ENCODE measurements at regions of chr22 and their contacts with region 1.

Region 1: GRCh38 chr22:49960159-49961004 is at the start of gene PIM3:
- DNase-seq: peak; percentile 89
- ATAC-seq: peak; percentile 79
- H3K4me3 Mint-ChIP-seq: peak within 1 kb of the TSS; percentile 91
- H3K27ac Mint-ChIP-seq: peak within 1 kb of the TSS; percentile 90
- H3K4me1 Mint-ChIP-seq: peaks cover 38% of the 10 kb centered on the region
- H3K27me3 Mint-ChIP-seq: no peaks in the 10 kb centered on the region
- CTCF ChIP-seq: no peak
- total RNA-seq, gene PIM3: 79.8 and 91.7 TPM in 2 replicates

Region 2: DNA sequence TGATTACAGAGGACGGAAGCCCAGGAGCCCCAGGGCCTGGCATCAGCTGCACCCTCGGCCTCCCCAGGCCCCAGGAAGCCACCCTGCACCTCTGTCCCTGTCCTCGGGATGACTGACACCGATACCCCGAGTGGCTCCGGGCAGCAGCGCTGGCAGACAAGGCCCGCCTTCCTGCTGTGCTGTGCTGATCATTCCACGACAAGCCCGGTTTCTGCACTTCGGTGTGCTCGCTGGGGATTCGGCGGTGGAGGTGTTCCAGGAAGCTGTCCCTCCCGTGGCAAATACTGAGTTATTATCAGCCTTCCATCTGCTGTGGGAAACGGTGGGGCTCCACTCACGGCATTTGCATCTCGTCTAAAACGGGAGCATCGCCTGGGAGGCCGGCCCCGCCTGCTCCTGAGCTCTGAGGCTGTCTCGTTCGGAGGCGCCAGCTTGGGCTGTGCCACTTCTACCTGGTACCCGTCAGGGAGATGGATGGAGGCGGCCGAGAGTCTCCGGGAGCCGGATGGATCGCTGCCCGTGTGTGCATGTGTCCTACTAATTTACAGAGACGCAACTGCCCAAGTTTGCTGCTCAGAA is 638.8 kb before region 1 on chr22:
- CTCF ChIA-PET with region 1: no interaction called
- POLR2A ChIA-PET with region 1: no interaction called
- intact Hi-C with region 1: no loop called
- DNase-seq: no peak
- ATAC-seq: no peak
- H3K4me3 Mint-ChIP-seq: no peak overlapping the region
- H3K27ac Mint-ChIP-seq: no peak overlapping the region
- H3K4me1 Mint-ChIP-seq: no peaks in the 10 kb centered on the region
- H3K27me3 Mint-ChIP-seq: peaks cover 6% of the 10 kb centered on the region
- CTCF ChIP-seq: no peak

Region 3: DNA sequence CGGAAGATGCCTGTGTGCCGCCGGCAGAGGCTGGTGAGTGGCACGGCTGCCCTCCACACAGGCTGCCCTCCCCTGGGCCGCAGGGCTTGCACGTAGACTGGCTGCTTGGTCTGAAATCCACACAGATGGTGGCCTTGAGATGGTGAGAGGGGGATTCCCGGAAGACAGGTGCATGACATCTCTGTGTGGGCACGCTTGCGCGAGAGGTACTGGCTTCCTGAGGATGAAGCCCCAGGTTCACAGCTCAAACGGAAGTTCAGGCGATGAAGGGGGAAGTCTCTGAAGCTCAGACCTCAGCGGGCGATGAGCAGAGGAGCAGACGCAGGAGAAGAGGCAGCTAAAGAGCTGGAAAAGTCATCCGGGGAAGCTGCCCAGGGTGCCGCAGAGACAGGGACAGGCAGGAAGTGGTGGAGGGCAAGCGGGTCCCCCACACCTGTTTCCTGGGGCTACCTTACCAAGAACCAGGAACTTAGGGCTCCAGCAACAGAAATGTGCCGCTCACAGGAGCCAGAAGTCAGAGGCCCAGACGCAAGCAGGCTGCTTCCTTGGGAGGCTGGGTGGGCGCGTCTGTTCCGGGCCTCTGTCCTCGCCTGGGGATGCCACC is 34.8 kb before region 1 on chr22:
- CTCF ChIA-PET with region 1: interaction called, 36 read pairs
- POLR2A ChIA-PET with region 1: interaction called, 828 read pairs
- intact Hi-C with region 1: no loop called
- DNase-seq: peak; percentile 75
- ATAC-seq: peak; percentile 76
- H3K4me3 Mint-ChIP-seq: peak overlapping the region; percentile 81
- H3K27ac Mint-ChIP-seq: peak overlapping the region; percentile 98
- H3K4me1 Mint-ChIP-seq: peaks cover 58% of the 10 kb centered on the region
- H3K27me3 Mint-ChIP-seq: no peaks in the 10 kb centered on the region
- CTCF ChIP-seq: no peak

Region 4: GRCh38 chr22:49970528-49971231 is 10.3 kb after region 1 on chr22:
- CTCF ChIA-PET with region 1: no interaction called
- POLR2A ChIA-PET with region 1: interaction called, 83 read pairs
- intact Hi-C with region 1: no loop called
- DNase-seq: peak; percentile 81
- ATAC-seq: peak; percentile 89
- H3K4me3 Mint-ChIP-seq: peak overlapping the region; percentile 80
- H3K27ac Mint-ChIP-seq: peak overlapping the region; percentile 85
- H3K4me1 Mint-ChIP-seq: peaks cover 38% of the 10 kb centered on the region
- H3K27me3 Mint-ChIP-seq: no peaks in the 10 kb centered on the region
- CTCF ChIP-seq: no peak

Region 5: GRCh38 chr22:49992921-49993648 is 32.7 kb after region 1 on chr22:
- CTCF ChIA-PET with region 1: interaction called, 12 read pairs
- POLR2A ChIA-PET with region 1: interaction called, 8 read pairs
- intact Hi-C with region 1: loop called (anchors 2 kb)
- DNase-seq: peak; percentile 61
- ATAC-seq: peak; percentile 98
- H3K4me3 Mint-ChIP-seq: peak overlapping the region; percentile 41
- H3K27ac Mint-ChIP-seq: peak overlapping the region; percentile 54
- H3K4me1 Mint-ChIP-seq: peaks cover 13% of the 10 kb centered on the region
- H3K27me3 Mint-ChIP-seq: no peaks in the 10 kb centered on the region
- CTCF ChIP-seq: no peak

Measured in activated B cell treated with CpG ODN at 0.5 μM for 24 hours (primary cell).